ENCODE measurements at regions of chr4 and their contacts with region 1.

Region 1: GRCh38 chr4:183840311-183840710 is 64.8 kb upstream of the STOX2 start:
- DNase-seq: peak; percentile 81 to 84 (median 82)
- ATAC-seq: peak; percentile 27 to 84 (median 68)
- H3K4me3 ChIP-seq: no peak overlapping the region
- H3K27ac ChIP-seq: no peak overlapping the region
- H3K4me1 ChIP-seq: peaks cover 0 to 21% (median 5%) of the 10 kb centered on the region in 12 donors
- H3K27me3 ChIP-seq: no peaks in the 10 kb centered on the region
- CTCF ChIP-seq: peak; percentile 83 to 93 (median 88)
- POLR2A ChIP-seq: no peak

Region 2: DNA sequence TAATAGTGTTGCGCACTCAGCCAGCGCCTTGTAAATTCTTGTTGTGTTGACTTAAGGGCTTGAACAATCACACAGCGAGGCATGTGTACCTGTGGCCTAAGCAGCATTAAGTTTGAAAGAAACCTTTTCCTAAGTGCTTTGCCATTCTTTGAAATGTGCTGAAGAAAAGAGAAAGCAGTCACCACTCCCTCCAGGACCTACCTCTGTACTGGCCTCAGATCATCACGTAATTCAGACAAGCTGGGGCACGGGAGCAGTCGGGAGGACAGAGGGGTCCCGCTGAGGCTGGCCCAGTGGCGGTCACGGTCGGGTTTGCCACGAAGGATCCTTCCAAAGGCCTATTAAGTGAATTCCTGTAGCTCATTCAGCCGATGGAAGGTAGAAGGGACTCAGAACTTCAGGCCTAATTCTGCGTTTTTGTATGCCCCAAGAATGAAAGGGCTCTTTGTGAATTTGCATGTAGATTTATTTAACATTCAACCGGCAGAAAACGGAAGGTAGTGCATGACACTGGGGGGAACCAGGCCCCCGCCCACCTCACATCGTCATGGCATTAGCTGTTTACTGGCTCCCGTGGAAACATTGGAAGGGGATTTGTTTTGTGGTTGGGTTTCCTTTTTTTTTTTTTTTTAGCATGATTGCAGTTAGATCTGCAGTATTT is 74.9 kb before region 1 on chr4:
- intact Hi-C with region 1: loop called in 1 of 10 experiments (anchors 10 kb)
- DNase-seq: peak in 4 of 5 donors; percentile 59 to 74 (median 64)
- ATAC-seq: peak in 3 of 4 donors; percentile 53 to 90 (median 74)
- H3K4me3 ChIP-seq: peak overlapping the region in 11 of 12 donors; percentile 1 to 57 (median 42)
- H3K27ac ChIP-seq: peak overlapping the region; percentile 65 to 88 (median 82)
- H3K4me1 ChIP-seq: peaks cover 0 to 24% (median 7%) of the 10 kb centered on the region in 12 donors
- H3K27me3 ChIP-seq: no peaks in the 10 kb centered on the region
- CTCF ChIP-seq: no peak
- POLR2A ChIP-seq: no peak

Region 3: GRCh38 chr4:183905081-183905592 is 64.8 kb after region 1 on chr4 and contains the start of gene STOX2:
- intact Hi-C with region 1: loop called in 7 of 10 experiments (anchors 2 to 10 kb)
- DNase-seq: peak; percentile 85 to 92 (median 91)
- ATAC-seq: peak; percentile 93 to 97 (median 95)
- H3K4me3 ChIP-seq: peak within 1 kb of the TSS; percentile 63 to 88 (median 77)
- H3K27ac ChIP-seq: peak within 1 kb of the TSS; percentile 63 to 94 (median 87)
- H3K4me1 ChIP-seq: peaks cover 0 to 42% (median 16%) of the 10 kb centered on the region in 12 donors
- H3K27me3 ChIP-seq: peaks cover 0 to 27% (median 0%) of the 10 kb centered on the region in 9 donors
- CTCF ChIP-seq: no peak
- POLR2A ChIP-seq: peak in 1 of 2 donors; percentile 85
- total RNA-seq, gene STOX2: 11.5 to 19.6 (median 13.5) TPM

Region 4: GRCh38 chr4:183996868-183997267 is 156.6 kb after region 1 on chr4:
- intact Hi-C with region 1: loop called in 1 of 10 experiments (anchors 10 kb)
- DNase-seq: no peak
- ATAC-seq: peak; percentile 22 to 69 (median 34)
- H3K4me3 ChIP-seq: no peak overlapping the region
- H3K27ac ChIP-seq: peak overlapping the region in 2 of 12 donors; percentile 3 to 13
- H3K4me1 ChIP-seq: peaks cover 0 to 32% (median 5%) of the 10 kb centered on the region in 12 donors
- H3K27me3 ChIP-seq: no peaks in the 10 kb centered on the region
- CTCF ChIP-seq: no peak
- POLR2A ChIP-seq: no peak

Region 5: DNA sequence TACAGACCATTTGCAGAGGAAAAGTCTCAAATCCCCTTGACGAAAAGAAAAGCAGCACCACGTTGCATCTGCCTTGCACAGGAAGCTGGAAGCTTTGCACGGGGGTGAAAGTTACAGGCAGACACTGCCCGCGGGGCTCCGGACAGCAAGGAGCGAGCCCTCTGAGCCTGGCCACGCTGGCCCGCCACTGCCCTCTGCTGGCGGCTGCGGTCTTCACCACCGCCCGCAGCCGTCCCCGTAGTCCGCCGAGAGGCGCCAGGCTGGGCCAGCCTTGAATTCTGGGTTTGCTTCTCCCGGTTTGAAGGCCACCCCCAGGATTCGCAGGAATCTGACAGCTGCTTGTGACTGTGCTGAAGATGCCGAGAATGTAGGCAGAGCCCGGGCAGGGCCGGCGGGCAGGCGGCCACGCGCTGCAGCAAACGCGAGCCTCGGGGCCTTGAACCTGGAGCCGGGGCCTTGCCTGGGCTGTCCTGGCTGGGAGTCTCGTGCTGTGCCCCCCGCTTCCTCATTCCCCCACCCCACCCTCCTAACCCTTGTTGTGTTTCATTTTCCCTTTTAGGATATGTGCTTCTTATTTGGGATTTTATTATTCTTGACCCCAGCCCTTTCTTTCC is 328.2 kb after region 1 on chr4:
- intact Hi-C with region 1: loop called (anchors 1 to 2 kb)
- DNase-seq: peak; percentile 72 to 90 (median 79)
- ATAC-seq: peak; percentile 73 to 96 (median 96)
- H3K4me3 ChIP-seq: peak overlapping the region in 4 of 12 donors; percentile 1 to 38 (median 18)
- H3K27ac ChIP-seq: no peak overlapping the region
- H3K4me1 ChIP-seq: peaks cover 0 to 7% (median 1%) of the 10 kb centered on the region in 12 donors
- H3K27me3 ChIP-seq: peaks cover 0 to 27% (median 0%) of the 10 kb centered on the region in 9 donors
- CTCF ChIP-seq: peak; percentile 88 to 99 (median 96)
- POLR2A ChIP-seq: no peak